AG04449 (cell line): ENCODE measurements at regions of chr14 and their contacts with region 1.

Region 1: GRCh38 chr14:57692671-57693070 is 173.2 kb downstream of the SLC35F4 start:
- DNase-seq: peak; percentile 19
- H3K4me3 ChIP-seq: no peak overlapping the region
- CTCF ChIP-seq: peak; percentile 34

Region 2: DNA sequence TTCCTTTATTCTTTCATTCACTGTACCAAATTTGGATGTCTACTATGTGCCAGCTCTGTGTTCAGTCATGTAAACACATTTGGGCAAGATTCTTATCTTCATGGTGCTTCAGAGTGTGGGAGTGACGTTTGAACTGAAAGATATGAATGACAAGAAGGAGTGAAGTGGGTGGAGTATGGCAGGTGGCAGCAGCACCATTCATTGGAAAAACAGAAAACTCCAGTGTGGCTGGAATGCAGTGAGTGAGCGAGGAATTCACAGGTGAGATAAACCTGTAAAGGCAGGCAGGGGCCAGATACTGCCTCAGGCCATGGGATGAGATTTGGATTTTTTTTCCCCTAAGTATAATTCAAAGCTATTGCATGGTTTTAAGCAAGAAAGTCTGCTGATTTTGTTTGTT is 58.3 kb before region 1 on chr14:
- CTCF ChIA-PET with region 1: no interaction called
- POLR2A ChIA-PET with region 1: no interaction called
- DNase-seq: no peak
- H3K4me3 ChIP-seq: no peak overlapping the region
- CTCF ChIP-seq: no peak

Region 3: DNA sequence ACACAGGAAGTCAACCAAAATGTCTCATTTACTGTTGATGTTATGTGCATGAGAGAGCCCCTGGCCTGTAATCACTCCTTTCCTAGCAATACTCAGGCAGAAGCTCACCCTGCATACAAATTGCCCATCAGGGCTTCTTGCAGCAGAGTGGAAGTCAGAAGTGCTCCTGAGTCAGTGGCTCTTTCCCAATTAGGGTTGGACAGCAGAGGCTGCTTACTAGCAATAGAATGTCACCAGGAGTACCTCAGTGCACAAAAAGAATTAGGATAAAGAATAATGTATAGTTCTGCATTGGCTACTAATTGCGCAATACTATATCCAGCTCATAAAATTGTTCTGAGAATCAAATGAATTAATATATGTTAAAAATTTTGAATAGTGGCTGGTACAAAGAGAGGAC is 12.1 kb after region 1 on chr14:
- CTCF ChIA-PET with region 1: interaction called, 16 read pairs
- POLR2A ChIA-PET with region 1: no interaction called
- DNase-seq: no peak
- H3K4me3 ChIP-seq: no peak overlapping the region
- CTCF ChIP-seq: no peak

Region 4: GRCh38 chr14:57871459-57872080 is 178.9 kb after region 1 on chr14:
- CTCF ChIA-PET with region 1: interaction called, 106 read pairs
- POLR2A ChIA-PET with region 1: no interaction called
- DNase-seq: no peak
- H3K4me3 ChIP-seq: no peak overlapping the region
- CTCF ChIP-seq: peak; percentile 79

Region 5: DNA sequence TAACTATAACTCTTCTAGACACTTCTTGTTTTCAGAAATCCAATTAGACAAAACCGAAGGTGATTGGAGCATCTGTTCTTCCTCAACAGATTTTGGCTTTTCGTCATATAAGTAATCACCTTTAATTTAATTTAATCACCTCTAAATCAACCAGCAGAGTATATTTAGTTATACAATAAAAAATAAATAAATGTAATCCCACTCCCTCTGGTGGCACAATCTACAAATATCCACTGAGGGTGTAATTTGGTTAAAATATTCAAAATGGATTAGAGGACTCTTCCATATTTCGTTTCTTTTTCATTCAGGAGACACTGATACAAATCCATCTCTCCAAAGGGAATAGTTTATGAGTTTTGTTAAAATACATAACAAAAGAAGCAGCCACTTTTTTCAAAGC is 191.5 kb after region 1 on chr14:
- CTCF ChIA-PET with region 1: interaction called, 28 read pairs
- POLR2A ChIA-PET with region 1: no interaction called
- DNase-seq: no peak
- H3K4me3 ChIP-seq: no peak overlapping the region
- CTCF ChIP-seq: no peak

Region 6: GRCh38 chr14:58072288-58073071 is 379.8 kb after region 1 on chr14:
- CTCF ChIA-PET with region 1: interaction called, 100 read pairs
- POLR2A ChIA-PET with region 1: no interaction called
- DNase-seq: no peak
- H3K4me3 ChIP-seq: no peak overlapping the region
- CTCF ChIP-seq: peak; percentile 62

Region 7: GRCh38 chr14:58078068-58078467 is 385.4 kb after region 1 on chr14:
- CTCF ChIA-PET with region 1: interaction called, 100 read pairs
- POLR2A ChIA-PET with region 1: no interaction called
- DNase-seq: no peak
- H3K4me3 ChIP-seq: no peak overlapping the region
- CTCF ChIP-seq: no peak